Left lung (tissue), 14 donors: ENCODE measurements at regions of chr4 and their contacts with region 1.

Region 1: GRCh38 chr4:125350470-125351135 is 35.8 kb downstream of the FAT4 start:
- DNase-seq: no peak
- ATAC-seq: no peak
- H3K4me3 ChIP-seq: no peak overlapping the region
- H3K27ac ChIP-seq: no peak overlapping the region
- H3K4me1 ChIP-seq: no peaks in the 10 kb centered on the region
- H3K27me3 ChIP-seq: no peaks in the 10 kb centered on the region
- CTCF ChIP-seq: no peak

Region 2: GRCh38 chr4:125334926-125335325 is 15.7 kb before region 1 on chr4:
- intact Hi-C with region 1: loop called in 1 of 2 experiments (anchors 2 kb)
- DNase-seq: no peak
- ATAC-seq: no peak
- H3K4me3 ChIP-seq: no peak overlapping the region
- H3K27ac ChIP-seq: no peak overlapping the region
- H3K4me1 ChIP-seq: peaks cover 4% of the 10 kb centered on the region in 2 donors
- H3K27me3 ChIP-seq: no peaks in the 10 kb centered on the region
- CTCF ChIP-seq: no peak